ENCODE measurements at regions of chr6 and their contacts with region 1.

Region 1: GRCh38 chr6:112043032-112044007 is 10.6 kb upstream of the CCN6 start:
- DNase-seq: peak; percentile 97
- H3K4me3 ChIP-seq: peak overlapping the region; percentile 63
- H3K27ac ChIP-seq: peak overlapping the region; percentile 84
- H3K4me1 ChIP-seq: no peaks in the 10 kb centered on the region
- H3K27me3 ChIP-seq: no peaks in the 10 kb centered on the region
- CTCF ChIP-seq: peak; percentile 97

Region 2: GRCh38 chr6:111195656-111196055 is 847.7 kb before region 1 on chr6:
- CTCF ChIA-PET with region 1: interaction called, 11 read pairs
- POLR2A ChIA-PET with region 1: no interaction called
- intact Hi-C with region 1: no loop called
- DNase-seq: no peak
- H3K4me3 ChIP-seq: no peak overlapping the region
- H3K27ac ChIP-seq: no peak overlapping the region
- H3K4me1 ChIP-seq: no peaks in the 10 kb centered on the region
- H3K27me3 ChIP-seq: no peaks in the 10 kb centered on the region
- CTCF ChIP-seq: no peak

Region 3: DNA sequence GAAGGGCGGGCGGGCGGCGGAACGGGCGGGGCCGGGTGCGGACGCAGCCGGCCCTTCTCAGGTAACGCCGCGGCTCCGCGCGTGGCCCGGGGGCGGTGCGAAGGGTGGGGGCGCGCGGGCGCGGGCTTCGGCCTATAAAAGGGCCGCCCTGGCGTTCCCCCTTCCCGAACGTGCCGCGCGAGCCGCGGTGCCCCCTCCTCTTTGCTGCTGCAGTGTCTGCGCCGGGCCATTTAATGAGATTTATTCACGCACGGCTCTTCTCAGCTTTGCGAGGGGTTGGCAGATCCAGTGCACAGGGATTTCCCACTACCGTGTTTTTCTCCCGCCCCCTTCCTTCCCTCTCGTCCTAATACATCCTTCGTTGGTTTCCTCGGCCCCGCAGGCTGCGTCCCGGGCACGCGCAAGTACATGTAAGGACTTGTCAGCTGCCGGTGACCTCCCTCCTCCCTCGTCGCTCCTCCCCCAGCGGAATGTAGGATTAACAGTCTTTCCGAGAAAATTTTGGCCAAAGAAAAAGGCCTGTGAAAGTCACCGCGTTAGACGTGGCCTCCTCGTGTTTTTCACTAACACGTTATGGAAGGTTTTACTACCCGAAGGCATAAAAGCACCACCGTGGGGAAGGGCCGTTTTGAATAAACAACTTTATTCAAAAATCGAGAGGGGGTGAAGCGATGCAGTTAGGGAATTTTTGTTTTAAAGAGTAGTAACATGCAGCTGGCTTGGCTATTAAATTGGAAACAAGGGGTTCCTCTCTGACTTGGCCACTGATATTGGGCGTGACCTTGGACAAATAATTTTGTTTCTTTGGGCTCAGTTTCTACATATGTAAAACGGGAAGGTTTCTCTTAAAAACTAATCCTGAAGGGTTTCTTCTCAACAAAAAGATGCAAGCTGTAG is 559.3 kb before region 1 on chr6:
- CTCF ChIA-PET with region 1: no interaction called
- POLR2A ChIA-PET with region 1: no interaction called
- intact Hi-C with region 1: loop called (anchors 5 kb)
- DNase-seq: peak; percentile 95
- H3K4me3 ChIP-seq: peak overlapping the region; percentile 82
- H3K27ac ChIP-seq: peak overlapping the region; percentile 97
- H3K4me1 ChIP-seq: peaks cover 38% of the 10 kb centered on the region
- H3K27me3 ChIP-seq: no peaks in the 10 kb centered on the region
- CTCF ChIP-seq: no peak

Region 4: GRCh38 chr6:111997078-111997852 is 46.1 kb before region 1 on chr6:
- CTCF ChIA-PET with region 1: no interaction called
- POLR2A ChIA-PET with region 1: no interaction called
- intact Hi-C with region 1: loop called (anchors 1 kb)
- DNase-seq: peak; percentile 83
- H3K4me3 ChIP-seq: no peak overlapping the region
- H3K27ac ChIP-seq: no peak overlapping the region
- H3K4me1 ChIP-seq: peaks cover 9% of the 10 kb centered on the region
- H3K27me3 ChIP-seq: no peaks in the 10 kb centered on the region
- CTCF ChIP-seq: peak; percentile 91